ENCODE measurements at regions of chr18 and their contacts with region 1.

Region 1: GRCh38 chr18:58043491-58044379 is at the start of gene NEDD4L:
- DNase-seq: peak; percentile 89
- H3K4me3 ChIP-seq: peak within 1 kb of the TSS; percentile 70 to 87 (median 86)
- H3K27ac ChIP-seq: peak within 1 kb of the TSS; percentile 90 to 95 (median 94)
- H3K4me1 ChIP-seq: peaks cover 0 to 31% (median 28%) of the 10 kb centered on the region in 4 donors
- H3K27me3 ChIP-seq: no peaks in the 10 kb centered on the region
- CTCF ChIP-seq: peak; percentile 84 to 90 (median 88)
- EP300 ChIP-seq: no peak
- POLR2A ChIP-seq: no peak
- total RNA-seq, gene NEDD4L: 217 to 773 (median 305) TPM

Region 2: DNA sequence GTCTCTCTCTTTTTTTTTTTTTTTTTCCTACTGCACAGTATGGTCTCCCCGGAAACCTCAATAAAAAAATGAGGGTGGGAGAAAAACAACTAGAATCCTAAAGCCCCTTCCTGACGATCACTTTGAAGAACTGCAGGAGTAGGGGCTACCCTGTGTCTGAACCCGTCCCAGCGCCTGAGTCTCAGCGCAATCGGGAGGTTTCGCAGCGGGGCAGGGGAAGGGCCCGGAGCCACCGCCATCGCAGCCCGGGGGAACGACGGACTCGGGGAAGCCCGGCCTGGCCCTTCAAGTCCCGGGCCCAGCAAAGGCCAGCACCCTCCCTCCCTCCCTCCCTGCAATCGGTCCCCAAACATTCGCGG is 422.5 kb before region 1 on chr18:
- in situ Hi-C with region 1: loop called in 1 of 4 experiments (anchors 10 kb)
- intact Hi-C with region 1: no loop called
- DNase-seq: no peak
- H3K4me3 ChIP-seq: peak overlapping the region; percentile 82 to 97 (median 87)
- H3K27ac ChIP-seq: peak overlapping the region; percentile 91 to 97 (median 96)
- H3K4me1 ChIP-seq: peaks cover 0 to 24% (median 16%) of the 10 kb centered on the region in 4 donors
- H3K27me3 ChIP-seq: no peaks in the 10 kb centered on the region
- CTCF ChIP-seq: no peak
- EP300 ChIP-seq: no peak
- POLR2A ChIP-seq: no peak

Region 3: DNA sequence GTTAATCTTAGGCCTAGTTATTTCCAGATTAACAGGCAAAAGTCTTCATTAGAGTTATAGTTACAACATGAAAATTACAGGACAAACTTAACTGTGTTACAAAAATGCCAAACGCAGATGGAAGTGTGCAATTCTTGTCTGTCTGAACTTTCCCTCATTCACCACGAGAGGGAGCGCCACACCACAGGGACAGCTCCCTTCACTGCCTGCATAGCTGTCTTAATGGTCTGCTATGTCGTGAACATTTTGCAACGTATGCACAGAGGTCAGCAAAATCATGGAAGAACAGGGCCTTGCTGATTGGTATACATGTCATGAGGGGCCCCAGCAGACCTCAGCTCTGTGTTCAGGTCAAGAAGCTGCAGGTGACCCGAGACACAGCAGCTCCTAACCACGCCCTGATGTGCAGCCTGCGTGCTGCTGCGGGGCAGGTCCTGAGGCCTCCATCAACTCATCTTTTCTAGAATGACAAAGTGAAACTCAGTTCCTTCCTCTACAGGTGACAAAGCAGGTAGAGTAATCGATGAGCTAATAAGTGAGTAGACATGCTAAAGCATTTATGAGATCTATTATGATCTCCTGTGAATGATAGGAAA is 161.8 kb before region 1 on chr18:
- in situ Hi-C with region 1: loop called in 1 of 4 experiments (anchors 25 kb)
- intact Hi-C with region 1: no loop called
- DNase-seq: peak; percentile 74
- H3K4me3 ChIP-seq: no peak overlapping the region
- H3K27ac ChIP-seq: no peak overlapping the region
- H3K4me1 ChIP-seq: peaks cover 0 to 3% (median 0%) of the 10 kb centered on the region in 4 donors
- H3K27me3 ChIP-seq: no peaks in the 10 kb centered on the region
- CTCF ChIP-seq: peak; percentile 85 to 91 (median 90)
- EP300 ChIP-seq: no peak
- POLR2A ChIP-seq: no peak

Region 4: GRCh38 chr18:58117786-58118403 is 74.2 kb after region 1 on chr18:
- in situ Hi-C with region 1: no loop called
- intact Hi-C with region 1: loop called (anchors 2 kb)
- DNase-seq: peak; percentile 63
- H3K4me3 ChIP-seq: no peak overlapping the region
- H3K27ac ChIP-seq: peak overlapping the region; percentile 62 to 73 (median 70)
- H3K4me1 ChIP-seq: peaks cover 7 to 19% (median 13%) of the 10 kb centered on the region in 4 donors
- H3K27me3 ChIP-seq: no peaks in the 10 kb centered on the region
- CTCF ChIP-seq: no peak
- EP300 ChIP-seq: no peak
- POLR2A ChIP-seq: no peak

Region 5: DNA sequence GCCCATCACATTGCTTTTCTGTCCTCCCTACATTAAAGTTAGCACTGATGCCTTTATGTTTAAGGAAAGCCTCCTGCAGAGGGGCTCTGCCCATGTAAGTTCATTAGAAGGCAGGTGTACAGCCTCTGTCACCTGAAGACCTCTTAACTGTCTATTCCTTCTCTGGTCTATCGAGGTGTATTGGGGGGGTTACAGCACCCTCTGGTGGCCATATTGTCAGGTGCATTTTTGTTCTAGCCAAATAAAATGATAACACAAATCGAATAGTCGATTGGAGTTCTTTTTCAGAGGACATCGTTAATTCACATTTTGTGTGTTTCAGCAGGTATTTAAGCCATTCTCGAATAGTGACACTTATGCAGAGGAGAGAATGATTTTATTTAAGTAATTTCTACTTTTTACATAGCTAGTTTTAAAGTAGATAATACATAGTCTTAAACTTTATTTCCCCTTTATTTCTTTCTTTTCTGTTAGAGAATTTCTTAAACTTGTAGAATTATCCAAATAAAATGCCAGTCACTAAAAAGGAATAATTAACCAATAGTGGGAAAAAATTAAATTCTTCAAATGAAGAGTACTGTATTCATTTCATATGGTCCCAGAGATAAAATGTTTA is 137.1 kb after region 1 on chr18:
- in situ Hi-C with region 1: no loop called
- intact Hi-C with region 1: loop called (anchors 5 kb)
- DNase-seq: peak; percentile 72
- H3K4me3 ChIP-seq: no peak overlapping the region
- H3K27ac ChIP-seq: no peak overlapping the region
- H3K4me1 ChIP-seq: peaks cover 8 to 46% (median 31%) of the 10 kb centered on the region in 4 donors
- H3K27me3 ChIP-seq: no peaks in the 10 kb centered on the region
- CTCF ChIP-seq: peak; percentile 82 to 93 (median 89)
- EP300 ChIP-seq: no peak
- POLR2A ChIP-seq: no peak

Region 6: GRCh38 chr18:58359218-58359617 is 315.5 kb after region 1 on chr18:
- in situ Hi-C with region 1: no loop called
- intact Hi-C with region 1: loop called (anchors 10 kb)
- DNase-seq: no peak
- H3K4me3 ChIP-seq: no peak overlapping the region
- H3K27ac ChIP-seq: no peak overlapping the region
- H3K4me1 ChIP-seq: no peaks in the 10 kb centered on the region
- H3K27me3 ChIP-seq: no peaks in the 10 kb centered on the region
- CTCF ChIP-seq: no peak
- EP300 ChIP-seq: no peak
- POLR2A ChIP-seq: no peak

Measured in transverse colon (tissue), 4 donors.